HEK293 (cell line): ENCODE measurements at regions of chr5 and their contacts with region 1.

Region 1: GRCh38 chr5:43120720-43121564 is at the start of gene ZNF131:
- H3K4me3 ChIP-seq: peak within 1 kb of the TSS; percentile 86
- H3K27ac ChIP-seq: peak within 1 kb of the TSS; percentile 92
- H3K4me1 ChIP-seq: peaks cover 11% of the 10 kb centered on the region; the same call in 1 of the 2 replicates
- CTCF ChIP-seq: no peak; the same call in 1 of the 2 replicates

Region 2: GRCh38 chr5:43019614-43020293 is 101.2 kb before region 1 on chr5:
- CTCF ChIA-PET with region 1: no interaction called
- POLR2A ChIA-PET with region 1: interaction called, 17 read pairs
- H3K4me3 ChIP-seq: peak overlapping the region; percentile 56
- H3K27ac ChIP-seq: peak overlapping the region; percentile 57; the same call in 1 of the 2 replicates
- H3K4me1 ChIP-seq: peaks cover 16% of the 10 kb centered on the region
- CTCF ChIP-seq: peak; percentile 88

Region 3: DNA sequence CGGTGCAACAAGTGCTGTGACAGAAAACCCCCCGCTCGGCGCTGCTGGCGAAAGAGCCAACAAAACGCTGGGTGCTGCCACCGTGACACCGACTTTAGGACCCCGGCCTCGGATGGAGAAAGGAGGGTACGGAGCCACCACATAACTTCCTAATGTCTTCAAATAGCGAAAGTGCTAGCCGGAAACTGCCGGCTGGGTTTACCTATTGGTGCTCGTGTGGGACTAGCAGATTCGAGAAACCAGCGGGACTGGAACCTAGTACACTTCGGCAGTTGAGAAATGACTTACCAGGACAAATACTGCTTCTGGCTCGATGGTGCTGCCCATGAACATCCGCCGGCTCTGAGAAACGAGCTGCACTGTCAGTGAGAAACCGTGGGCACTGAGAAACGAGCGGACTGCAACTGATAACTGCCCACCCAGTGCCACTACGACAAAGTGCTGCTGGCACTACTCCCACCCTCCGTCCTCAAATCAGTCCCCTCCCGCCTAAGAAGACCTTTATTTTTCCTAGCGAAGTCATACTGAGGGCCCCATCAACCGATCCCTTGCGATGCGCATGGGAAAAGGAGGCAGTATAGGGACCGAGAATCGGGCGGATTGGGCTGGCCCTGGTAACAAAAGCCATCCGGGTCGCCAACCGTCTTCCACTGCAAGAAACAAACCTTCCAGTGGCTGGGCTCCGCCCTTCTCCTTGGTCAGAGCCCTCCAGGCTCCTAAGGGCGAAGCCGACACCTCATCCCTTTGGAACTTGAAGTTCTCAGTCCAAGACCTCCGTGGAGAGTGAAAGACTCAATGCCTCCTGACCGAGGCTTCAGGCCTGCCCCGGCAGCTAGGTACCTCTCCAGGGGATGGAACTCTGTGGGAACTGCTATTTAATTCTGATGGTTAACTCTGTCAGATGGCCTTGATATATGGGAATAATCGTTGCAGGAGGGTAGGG is 53.9 kb before region 1 on chr5:
- CTCF ChIA-PET with region 1: interaction called, 3 read pairs
- POLR2A ChIA-PET with region 1: interaction called, 28 read pairs
- H3K4me3 ChIP-seq: peak overlapping the region; percentile 63
- H3K27ac ChIP-seq: peak overlapping the region; percentile 87
- H3K4me1 ChIP-seq: peaks cover 2% of the 10 kb centered on the region; the same call in 1 of the 2 replicates
- CTCF ChIP-seq: no peak

Region 4: DNA sequence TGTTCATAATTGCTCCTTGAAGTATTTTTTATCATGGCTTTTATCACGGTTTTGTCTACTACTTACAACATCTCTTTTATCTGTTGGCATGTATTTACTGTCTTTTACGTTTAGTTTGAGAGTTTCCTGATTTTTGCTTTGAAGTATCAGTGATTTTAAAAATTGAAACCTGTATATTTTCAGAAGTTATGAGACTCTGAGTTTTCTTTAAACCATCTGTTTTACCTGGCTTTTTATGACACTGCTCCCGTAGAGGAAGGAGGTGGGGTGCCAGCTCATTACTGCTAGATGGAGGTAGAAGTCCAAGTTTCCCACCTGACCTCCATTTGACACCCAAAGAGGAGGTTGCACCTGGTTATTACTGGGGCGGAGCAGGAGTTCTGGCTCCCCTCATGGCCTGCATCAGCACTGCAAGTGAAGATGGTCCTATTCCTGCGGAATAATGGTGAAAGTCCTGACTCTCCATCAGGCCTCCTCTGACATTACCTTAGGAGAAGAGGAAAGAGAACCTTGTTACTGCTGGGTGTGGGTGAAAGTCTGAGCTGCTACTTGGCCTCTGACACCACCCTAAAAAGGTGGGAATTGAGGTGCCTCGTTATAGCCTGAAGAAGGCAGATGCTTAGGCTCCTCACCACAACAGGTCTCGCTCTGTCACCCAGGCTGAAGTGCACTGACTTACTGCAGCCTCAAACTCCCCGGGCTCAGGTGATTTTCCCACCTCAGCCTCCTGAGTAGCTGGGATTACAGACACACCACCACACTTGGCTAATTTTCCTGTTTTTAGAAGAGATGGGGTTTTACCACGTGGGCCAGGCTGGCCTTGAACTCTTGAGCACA is 10.1 kb before region 1 on chr5:
- CTCF ChIA-PET with region 1: interaction called, 141 read pairs
- POLR2A ChIA-PET with region 1: interaction called, 19 read pairs
- H3K4me3 ChIP-seq: no peak overlapping the region
- H3K27ac ChIP-seq: no peak overlapping the region
- H3K4me1 ChIP-seq: no peaks in the 10 kb centered on the region
- CTCF ChIP-seq: peak; percentile 45

Region 5: GRCh38 chr5:43171914-43172313 is 51.0 kb after region 1 on chr5:
- CTCF ChIA-PET with region 1: no interaction called
- POLR2A ChIA-PET with region 1: no interaction called
- H3K4me3 ChIP-seq: no peak overlapping the region
- H3K27ac ChIP-seq: no peak overlapping the region
- H3K4me1 ChIP-seq: no peaks in the 10 kb centered on the region
- CTCF ChIP-seq: no peak

Region 6: DNA sequence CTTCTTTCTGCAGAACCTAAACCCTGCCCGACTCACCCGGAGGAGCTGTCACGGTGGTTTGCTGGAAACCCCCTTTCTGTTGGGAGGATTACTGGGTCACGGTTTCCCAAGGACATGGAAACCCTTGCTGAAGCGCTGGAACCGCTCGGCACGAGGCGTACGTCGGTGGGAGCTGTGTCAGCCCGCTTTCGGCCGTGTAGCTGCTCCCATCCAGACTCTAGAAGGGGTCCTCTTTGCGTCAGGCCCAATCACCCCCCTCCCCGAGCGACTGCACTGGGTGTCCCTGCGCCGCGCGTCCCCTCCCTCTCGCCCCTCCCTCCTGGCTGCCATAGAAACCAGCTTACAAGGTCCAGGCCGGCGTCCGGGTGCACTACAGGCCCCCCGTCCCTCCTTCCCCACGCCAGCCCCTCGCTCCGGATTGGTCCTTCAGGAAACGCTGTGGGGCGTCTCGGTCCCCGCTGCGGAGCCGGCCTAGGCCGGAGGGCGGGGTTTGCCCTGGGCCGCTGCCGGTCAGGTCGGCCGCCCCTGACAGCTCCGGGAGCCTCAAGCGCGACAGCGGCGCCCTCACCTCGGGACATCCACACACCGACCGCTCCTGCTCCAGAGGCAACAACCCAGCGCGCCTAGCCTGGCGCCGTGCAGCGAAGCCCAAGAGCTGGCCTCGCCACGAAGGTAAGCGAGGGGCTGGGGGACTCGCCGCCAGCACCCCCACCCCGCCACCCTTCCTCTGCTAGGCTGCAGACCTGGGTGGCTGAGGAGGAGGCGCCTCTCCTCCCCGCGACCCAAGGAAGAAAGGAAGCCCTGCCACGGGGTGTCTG is 71.0 kb after region 1 on chr5 and contains the start of gene NIM1K:
- CTCF ChIA-PET with region 1: interaction called, 3 read pairs
- POLR2A ChIA-PET with region 1: interaction called, 26 read pairs
- H3K4me3 ChIP-seq: peak within 1 kb of the TSS; percentile 67
- H3K27ac ChIP-seq: no peak within 1 kb of the TSS; the same call in 1 of the 2 replicates
- H3K4me1 ChIP-seq: no peaks in the 10 kb centered on the region; the same call in 1 of the 2 replicates
- CTCF ChIP-seq: 0 out of 2 replicates have a peak, but pooled peaks have one; percentile 6

Region 7: DNA sequence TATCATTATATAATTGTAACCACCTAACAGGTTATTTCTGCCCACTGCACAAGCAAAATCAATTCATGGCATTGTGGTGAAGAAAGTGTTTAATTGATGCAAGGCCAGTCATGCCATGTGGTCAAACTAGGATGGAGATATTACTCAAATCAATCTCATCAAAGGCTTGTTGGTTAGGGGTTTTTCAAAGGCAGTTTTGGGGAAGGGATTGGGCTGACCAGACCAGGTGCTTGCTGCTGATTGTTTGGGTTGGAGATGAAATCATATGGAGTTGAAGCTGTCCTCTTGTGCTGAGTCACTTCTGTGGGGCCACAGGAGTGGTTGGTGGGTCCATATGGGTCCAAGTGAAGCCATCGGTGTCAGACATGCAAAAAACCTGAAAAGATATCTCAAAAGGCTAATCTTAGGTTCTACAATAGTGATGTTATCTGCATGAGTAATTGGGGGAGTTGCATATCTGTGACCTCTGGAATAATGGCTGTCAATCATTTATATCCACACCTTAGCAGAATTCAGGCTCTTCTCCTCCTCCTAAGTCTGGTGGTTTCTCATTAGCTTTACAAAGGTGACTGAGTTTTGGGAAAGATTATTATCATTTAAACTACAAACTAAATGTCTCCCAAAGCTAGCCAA is 147.4 kb after region 1 on chr5:
- CTCF ChIA-PET with region 1: no interaction called
- POLR2A ChIA-PET with region 1: no interaction called
- H3K4me3 ChIP-seq: no peak overlapping the region
- H3K27ac ChIP-seq: no peak overlapping the region
- H3K4me1 ChIP-seq: no peaks in the 10 kb centered on the region
- CTCF ChIP-seq: no peak

Region 8: DNA sequence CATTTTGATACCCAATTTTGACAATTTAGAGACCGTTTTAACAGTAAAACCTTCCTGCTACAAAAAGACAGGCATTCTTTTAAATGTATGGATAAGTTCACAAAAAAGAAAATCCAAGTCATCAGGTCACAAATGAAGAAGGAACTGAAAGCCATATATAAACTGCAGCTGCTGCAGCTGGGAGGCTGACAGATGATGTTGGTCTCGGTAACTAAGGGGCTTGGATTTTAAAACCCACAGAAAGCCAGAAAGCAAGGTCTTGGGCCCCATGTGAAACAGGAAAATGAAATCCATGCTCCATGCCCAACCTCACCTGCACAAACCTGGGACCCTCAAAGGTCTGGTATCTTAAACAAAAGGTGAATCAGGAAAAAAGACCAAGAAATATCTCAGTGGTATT is 409.7 kb after region 1 on chr5:
- CTCF ChIA-PET with region 1: no interaction called
- POLR2A ChIA-PET with region 1: no interaction called
- H3K4me3 ChIP-seq: no peak overlapping the region
- H3K27ac ChIP-seq: no peak overlapping the region
- H3K4me1 ChIP-seq: no peaks in the 10 kb centered on the region
- CTCF ChIP-seq: no peak